ENCODE measurements at regions of chr2 and their contacts with region 1.

Region 1: DNA sequence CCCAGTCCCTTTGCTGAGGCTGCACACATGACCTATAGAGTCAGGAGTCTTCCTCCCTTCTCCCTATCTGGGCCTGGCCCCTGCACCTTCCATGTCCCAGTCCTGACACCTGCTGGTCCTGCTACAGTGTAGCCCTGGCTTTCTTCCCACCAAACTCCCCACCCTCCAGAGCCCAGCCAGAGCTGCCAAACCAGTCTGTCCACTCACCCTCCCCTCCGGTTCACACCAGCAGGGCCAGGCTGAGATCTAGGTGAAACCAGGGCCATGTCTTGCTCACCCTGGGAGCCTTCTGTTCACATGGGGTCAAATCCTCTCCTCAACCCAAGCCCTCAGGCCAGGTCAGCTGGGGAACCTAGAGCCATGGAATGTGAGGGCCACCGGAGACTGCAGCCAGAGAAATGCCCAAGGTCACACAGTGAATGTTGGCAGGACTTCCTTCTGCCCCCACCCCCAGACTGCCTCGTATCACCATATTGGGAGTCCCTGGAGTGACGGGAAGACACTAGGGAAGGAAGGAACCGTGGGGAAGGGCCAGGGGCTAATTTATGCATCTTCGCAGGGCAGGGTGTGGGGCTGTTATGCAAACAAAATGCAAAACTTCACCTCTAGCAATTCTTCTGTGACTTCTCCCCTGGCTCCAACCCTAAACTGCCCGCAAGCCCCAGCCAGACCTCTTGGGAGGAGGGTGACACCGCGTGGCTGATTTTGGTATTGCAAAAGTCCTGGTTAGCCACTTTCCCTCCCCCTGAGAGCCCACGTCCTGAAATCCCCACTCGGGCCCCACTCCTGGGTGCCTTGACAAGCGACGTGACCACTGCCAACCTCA is 14.6 kb downstream of the TNS1 start:
- DNase-seq: peak; percentile 91

Region 2: DNA sequence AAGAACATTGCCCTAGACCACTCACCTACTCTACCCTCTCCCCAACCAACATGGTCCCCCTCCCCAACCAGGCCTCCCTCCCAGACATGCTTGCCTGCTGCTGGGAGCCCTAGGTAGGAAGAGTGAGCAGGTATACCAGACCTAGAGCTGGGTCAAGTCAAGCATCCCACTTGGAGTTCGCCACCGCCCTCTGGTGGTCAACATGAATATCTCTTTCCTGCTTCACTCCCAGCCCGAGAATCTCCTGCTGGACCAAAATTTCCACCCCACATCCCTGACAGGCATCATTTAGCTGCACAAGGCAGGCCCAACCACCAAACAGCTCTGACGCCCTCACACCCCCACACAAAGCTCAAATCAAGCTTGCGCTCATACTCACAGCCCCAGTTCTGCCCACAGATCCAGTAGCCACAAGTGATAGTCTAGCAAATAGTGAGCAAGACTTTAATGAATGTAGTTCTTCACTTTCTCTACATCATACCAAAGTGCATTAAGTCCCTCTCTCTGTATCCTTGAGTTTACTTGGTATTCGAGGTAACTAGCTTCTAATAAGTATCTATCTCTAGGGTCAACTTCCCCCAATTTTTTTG is 101.4 kb before region 1 on chr2:
- intact Hi-C with region 1: loop called (anchors 2 kb)
- DNase-seq: peak; percentile 89

Region 3: GRCh38 chr2:217943446-217944389 is 44.5 kb before region 1 on chr2:
- intact Hi-C with region 1: loop called (anchors 1 kb)
- DNase-seq: peak; percentile 94

Region 4: DNA sequence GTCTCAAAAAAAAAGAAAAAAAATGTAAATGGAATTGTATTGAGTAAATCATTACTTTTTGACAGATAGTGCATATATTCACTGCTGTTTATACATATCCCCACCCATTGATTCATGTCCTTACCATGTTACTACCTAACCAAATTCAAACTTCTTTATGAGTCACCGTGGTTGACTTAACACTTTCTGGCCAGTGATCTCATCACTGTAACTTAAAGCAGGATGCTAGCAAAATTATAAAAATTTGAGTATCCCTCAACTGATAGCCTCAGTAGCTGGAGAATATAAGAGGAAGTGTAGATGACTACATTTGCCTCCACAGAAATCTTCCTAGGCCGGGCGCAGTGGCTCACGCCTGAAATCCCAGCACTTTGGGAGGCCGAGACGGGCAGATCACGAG is 593.8 kb after region 1 on chr2:
- intact Hi-C with region 1: no loop called
- DNase-seq: no peak